ENCODE measurements at regions of chr5 and their contacts with region 1.

Region 1: GRCh38 chr5:133868946-133869518 is 99.4 kb downstream of the C5orf15 start:
- DNase-seq: peak; percentile 66
- H3K4me3 ChIP-seq: no peak overlapping the region
- CTCF ChIP-seq: peak; percentile 86

Region 2: GRCh38 chr5:133814152-133814551 is 54.9 kb before region 1 on chr5:
- in situ Hi-C with region 1: loop called (anchors 5 kb)
- DNase-seq: no peak
- H3K4me3 ChIP-seq: no peak overlapping the region
- CTCF ChIP-seq: no peak

Region 3: GRCh38 chr5:133926489-133927299 is 57.7 kb after region 1 on chr5:
- in situ Hi-C with region 1: loop called (anchors 5 kb)
- DNase-seq: no peak
- H3K4me3 ChIP-seq: no peak overlapping the region
- CTCF ChIP-seq: no peak

Region 4: DNA sequence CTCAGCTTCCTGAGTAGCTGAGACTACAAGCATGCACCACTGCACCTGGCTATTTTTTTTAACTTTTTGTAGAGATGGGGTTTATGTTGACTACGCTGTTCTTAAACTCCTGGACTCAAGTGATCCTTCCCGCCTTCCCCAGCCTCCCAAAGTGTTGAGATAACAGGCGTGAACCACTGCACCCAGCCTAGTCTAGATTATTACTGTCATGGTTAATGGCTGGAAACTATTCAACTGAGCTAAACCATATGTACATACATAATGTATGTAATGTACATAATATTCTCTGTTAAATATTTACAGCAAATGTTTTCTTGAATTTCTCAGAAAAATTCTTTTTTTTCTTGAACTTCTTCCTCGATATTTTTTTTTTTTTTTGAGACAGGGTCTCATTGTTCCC is 335.5 kb after region 1 on chr5:
- in situ Hi-C with region 1: no loop called
- DNase-seq: no peak
- H3K4me3 ChIP-seq: no peak overlapping the region
- CTCF ChIP-seq: no peak